Left lung (tissue), 14 donors: ENCODE measurements at regions of chr11 and their contacts with region 1.

Region 1: DNA sequence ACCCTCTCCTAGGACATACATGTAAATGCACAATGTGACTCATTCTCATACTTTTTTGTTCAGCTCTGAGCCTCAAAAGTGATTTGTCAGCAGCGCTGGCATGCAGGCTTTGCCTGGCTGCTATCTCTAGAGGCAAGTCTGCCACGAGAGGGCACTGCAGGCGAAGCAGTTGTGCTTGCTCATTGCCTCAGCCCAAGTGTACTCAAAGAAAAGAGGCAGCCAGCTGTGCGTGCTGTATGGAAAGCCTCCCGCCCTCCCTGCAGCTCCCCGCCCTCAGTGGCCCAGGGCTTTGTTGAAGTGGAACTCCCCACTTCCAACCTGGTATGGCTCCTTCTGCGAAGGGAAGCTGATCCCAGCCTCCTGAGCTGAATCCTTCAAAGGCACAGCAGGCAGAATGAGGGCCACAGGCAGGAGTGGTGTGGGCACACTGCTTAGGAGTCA is 16.3 kb downstream of the SDHAF2 start:
- DNase-seq: peak; percentile 75 to 92 (median 92)
- ATAC-seq: peak; percentile 99
- H3K4me3 ChIP-seq: no peak overlapping the region
- H3K27ac ChIP-seq: no peak overlapping the region
- H3K4me1 ChIP-seq: peaks cover 2 to 8% of the 10 kb centered on the region in 2 donors
- H3K27me3 ChIP-seq: no peaks in the 10 kb centered on the region
- CTCF ChIP-seq: peak; percentile 76 to 84

Region 2: GRCh38 chr11:60985991-60986915 is 460.0 kb before region 1 on chr11:
- intact Hi-C with region 1: no loop called
- DNase-seq: peak in 1 of 4 donors; percentile 60
- ATAC-seq: peak; percentile 54
- H3K4me3 ChIP-seq: no peak overlapping the region
- H3K27ac ChIP-seq: no peak overlapping the region
- H3K4me1 ChIP-seq: no peaks in the 10 kb centered on the region
- H3K27me3 ChIP-seq: peaks cover 0 to 11% of the 10 kb centered on the region in 2 donors
- CTCF ChIP-seq: no peak

Region 3: DNA sequence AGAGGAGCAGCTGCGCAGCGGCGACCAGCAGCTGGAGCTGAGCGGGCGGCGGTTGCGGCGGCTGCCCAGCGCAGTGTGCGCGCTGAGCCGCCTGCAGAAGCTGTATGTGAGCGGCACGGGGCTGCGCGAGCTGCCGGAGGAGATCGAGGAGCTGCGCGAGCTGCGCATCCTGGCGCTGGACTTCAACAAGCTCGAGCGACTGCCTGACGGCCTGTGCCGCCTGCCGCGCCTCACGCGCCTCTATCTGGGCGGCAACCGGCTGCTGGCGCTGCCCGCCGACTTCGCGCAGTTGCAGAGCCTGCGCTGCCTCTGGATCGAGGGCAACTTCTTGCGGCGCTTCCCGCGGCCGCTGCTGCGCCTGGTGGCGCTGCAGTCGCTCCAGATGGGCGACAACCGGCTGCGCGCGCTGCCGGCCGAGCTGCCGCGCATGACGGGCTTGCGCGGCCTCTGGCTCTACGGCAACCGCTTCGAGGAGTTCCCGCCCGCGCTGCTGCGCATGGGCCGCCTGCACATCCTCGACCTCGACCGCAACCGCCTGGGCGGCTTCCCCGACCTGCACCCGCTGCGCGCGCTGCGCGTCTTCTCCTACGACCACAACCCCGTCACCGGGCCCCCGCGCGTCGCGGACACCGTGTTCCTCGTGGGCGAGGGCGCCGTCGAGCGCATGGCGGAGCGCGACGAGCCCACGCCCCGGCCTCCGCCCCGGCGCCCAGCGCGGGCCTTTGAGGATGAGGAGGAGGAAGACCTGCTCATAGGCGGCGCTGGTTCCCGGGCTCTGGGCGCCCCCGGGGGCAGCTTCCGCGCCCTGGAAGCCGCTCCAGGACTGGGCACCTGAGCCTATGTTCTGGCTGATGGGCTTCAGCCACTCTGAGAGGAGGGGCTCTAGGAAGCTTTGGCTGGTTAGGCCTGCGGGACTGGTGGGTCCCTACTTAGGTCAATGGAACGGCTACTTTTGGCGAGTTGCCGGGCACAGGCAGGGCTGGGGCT is 63.1 kb after region 1 on chr11:
- intact Hi-C with region 1: loop called in 1 of 2 experiments (anchors 10 kb)
- DNase-seq: peak; percentile 55 to 89 (median 72)
- ATAC-seq: peak; percentile 91
- H3K4me3 ChIP-seq: peak overlapping the region in 1 of 2 donors; percentile 24
- H3K27ac ChIP-seq: no peak overlapping the region
- H3K4me1 ChIP-seq: peaks cover 13 to 22% of the 10 kb centered on the region in 2 donors
- H3K27me3 ChIP-seq: peaks cover 33 to 86% of the 10 kb centered on the region in 2 donors
- CTCF ChIP-seq: peak; percentile 34 to 56